Gastrocnemius medialis (tissue), 4 donors: ENCODE measurements at regions of chr5 and their contacts with region 1.

Region 1: GRCh38 chr5:153504726-153505125 is 14.3 kb downstream of the GRIA1 start:
- DNase-seq: no peak
- ATAC-seq: no peak
- H3K4me3 ChIP-seq: no peak overlapping the region
- H3K27ac ChIP-seq: no peak overlapping the region
- H3K4me1 ChIP-seq: no peaks in the 10 kb centered on the region
- H3K27me3 ChIP-seq: no peaks in the 10 kb centered on the region
- CTCF ChIP-seq: no peak
- POLR2A ChIP-seq: no peak

Region 2: DNA sequence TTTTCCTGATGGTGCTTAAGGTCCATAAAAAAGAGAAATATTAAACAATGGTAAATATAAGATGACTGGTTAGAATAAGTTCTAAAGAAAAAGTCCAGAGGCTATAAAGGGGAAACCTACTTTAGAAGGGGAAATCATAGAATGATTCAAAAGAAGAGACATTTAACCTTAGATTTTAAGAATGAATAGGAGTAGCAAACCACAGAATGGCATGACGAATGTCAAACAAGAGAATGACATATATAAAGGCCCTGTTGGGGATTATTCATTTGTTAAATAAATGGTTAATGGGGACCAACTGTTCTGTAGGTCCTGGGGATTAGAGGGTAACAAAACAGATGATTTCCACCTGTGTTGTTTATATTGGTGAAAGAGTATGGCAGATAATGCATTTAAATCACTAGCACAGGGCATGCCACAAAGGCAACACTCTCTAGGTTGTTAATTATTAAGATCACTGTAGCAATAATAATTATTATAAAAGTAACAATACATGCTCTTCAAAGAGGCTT is 509.5 kb before region 1 on chr5:
- in situ Hi-C with region 1: no loop called
- intact Hi-C with region 1: no loop called
- DNase-seq: no peak
- ATAC-seq: no peak
- H3K4me3 ChIP-seq: no peak overlapping the region
- H3K27ac ChIP-seq: no peak overlapping the region
- H3K4me1 ChIP-seq: no peaks in the 10 kb centered on the region
- H3K27me3 ChIP-seq: no peaks in the 10 kb centered on the region
- CTCF ChIP-seq: no peak
- POLR2A ChIP-seq: no peak

Region 3: GRCh38 chr5:153459051-153459743 is 45.5 kb before region 1 on chr5:
- in situ Hi-C with region 1: no loop called
- intact Hi-C with region 1: loop called (anchors 2 kb)
- DNase-seq: no peak
- ATAC-seq: no peak
- H3K4me3 ChIP-seq: no peak overlapping the region
- H3K27ac ChIP-seq: no peak overlapping the region
- H3K4me1 ChIP-seq: no peaks in the 10 kb centered on the region
- H3K27me3 ChIP-seq: no peaks in the 10 kb centered on the region
- CTCF ChIP-seq: no peak
- POLR2A ChIP-seq: no peak